Activated CD8-positive, alpha-beta memory T cell treated with anti-CD3 and anti-CD28 coated beads, Interleukin-2, amount 10 ng/mL, durations not matched to agents 7 days and 5 days (primary cell): ENCODE measurements at regions of chr16 and their contacts with region 1.

Region 1: GRCh38 chr16:1705688-1706385 is at the start of gene MAPK8IP3:
- DNase-seq: peak; percentile 92
- ATAC-seq: peak; percentile 88
- H3K4me3 Mint-ChIP-seq: peak within 1 kb of the TSS; percentile 99
- H3K27ac Mint-ChIP-seq: peak within 1 kb of the TSS; percentile 99
- H3K4me1 Mint-ChIP-seq: peaks cover 34% of the 10 kb centered on the region
- H3K27me3 Mint-ChIP-seq: no peaks in the 10 kb centered on the region
- total RNA-seq, gene MAPK8IP3: 78.9 to 101 TPM

Region 2: DNA sequence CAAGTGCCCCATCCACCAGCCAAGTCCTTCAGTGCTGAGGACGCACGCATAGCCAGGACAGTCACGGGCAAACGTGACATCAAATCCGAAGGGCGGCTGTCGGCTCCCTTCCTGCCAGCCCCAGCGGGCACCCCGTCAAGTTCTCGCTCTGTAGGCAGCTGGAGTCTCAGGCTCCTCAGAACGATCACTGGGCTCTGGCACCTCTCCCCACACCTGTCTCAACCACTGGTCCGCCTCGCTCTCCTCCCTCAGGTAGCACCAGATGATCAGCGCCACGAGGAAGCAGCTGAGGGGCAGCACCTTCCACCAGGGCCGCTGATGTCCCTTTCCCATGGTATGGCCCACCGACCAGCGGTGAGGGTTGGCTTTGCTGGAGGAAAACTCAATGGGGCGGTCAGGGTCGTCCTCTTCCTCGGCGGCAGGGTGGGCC is 285.7 kb before region 1 on chr16:
- CTCF ChIA-PET with region 1: interaction called, 11 read pairs
- DNase-seq: peak; percentile 48
- ATAC-seq: no peak
- H3K4me3 Mint-ChIP-seq: peak overlapping the region; percentile 83
- H3K27ac Mint-ChIP-seq: peak overlapping the region; percentile 97
- H3K4me1 Mint-ChIP-seq: peaks cover 42% of the 10 kb centered on the region
- H3K27me3 Mint-ChIP-seq: no peaks in the 10 kb centered on the region

Region 3: DNA sequence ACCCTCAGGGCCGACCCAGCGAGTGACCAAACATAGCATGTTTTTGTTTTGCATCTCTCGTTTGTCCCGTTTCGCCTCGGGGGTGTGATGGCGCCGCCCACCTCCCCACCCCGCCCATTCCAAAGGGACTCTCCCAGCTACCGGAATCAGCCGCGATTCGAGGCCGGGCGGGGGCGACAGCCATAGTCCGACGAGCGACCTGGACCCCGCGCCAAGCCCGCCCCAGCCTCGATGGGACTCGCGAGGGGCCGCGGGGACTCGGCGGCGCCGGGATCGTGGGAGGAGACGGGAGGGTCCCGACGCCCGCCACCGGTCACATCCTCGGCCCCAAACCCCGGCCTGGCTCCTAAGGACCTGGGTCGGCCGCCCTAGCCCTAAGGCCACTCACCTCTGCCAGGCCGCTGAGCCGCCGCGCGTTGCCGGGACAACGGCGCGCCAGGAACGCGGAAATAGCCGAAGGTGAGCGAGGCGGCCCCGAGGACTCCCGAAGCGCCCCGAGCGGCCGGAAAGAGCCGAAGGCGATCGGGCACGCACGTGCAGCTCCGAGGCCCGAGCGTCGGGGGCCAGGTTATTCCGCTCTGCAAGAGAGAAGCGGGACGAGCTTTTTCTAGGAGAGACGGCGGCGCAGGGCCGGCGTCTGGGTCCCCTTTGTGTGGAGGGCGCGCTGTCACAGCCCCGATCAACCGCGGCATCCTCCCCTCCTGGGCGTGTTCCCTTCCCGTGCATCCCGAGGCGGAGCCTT is 95.4 kb before region 1 on chr16:
- CTCF ChIA-PET with region 1: interaction called, 22 read pairs
- DNase-seq: peak; percentile 93
- ATAC-seq: peak; percentile 53
- H3K4me3 Mint-ChIP-seq: peak overlapping the region; percentile 83
- H3K27ac Mint-ChIP-seq: peak overlapping the region; percentile 100
- H3K4me1 Mint-ChIP-seq: peaks cover 35% of the 10 kb centered on the region
- H3K27me3 Mint-ChIP-seq: no peaks in the 10 kb centered on the region

Region 4: GRCh38 chr16:1677802-1678496 is 27.9 kb before region 1 on chr16 and contains the start of gene JPT2:
- CTCF ChIA-PET with region 1: interaction called, 35 read pairs
- DNase-seq: peak; percentile 97
- ATAC-seq: peak; percentile 98
- H3K4me3 Mint-ChIP-seq: peak within 1 kb of the TSS; percentile 93
- H3K27ac Mint-ChIP-seq: peak within 1 kb of the TSS; percentile 83
- H3K4me1 Mint-ChIP-seq: peaks cover 32% of the 10 kb centered on the region
- H3K27me3 Mint-ChIP-seq: no peaks in the 10 kb centered on the region
- total RNA-seq, gene JPT2: 55.0 to 62.4 TPM

Region 5: DNA sequence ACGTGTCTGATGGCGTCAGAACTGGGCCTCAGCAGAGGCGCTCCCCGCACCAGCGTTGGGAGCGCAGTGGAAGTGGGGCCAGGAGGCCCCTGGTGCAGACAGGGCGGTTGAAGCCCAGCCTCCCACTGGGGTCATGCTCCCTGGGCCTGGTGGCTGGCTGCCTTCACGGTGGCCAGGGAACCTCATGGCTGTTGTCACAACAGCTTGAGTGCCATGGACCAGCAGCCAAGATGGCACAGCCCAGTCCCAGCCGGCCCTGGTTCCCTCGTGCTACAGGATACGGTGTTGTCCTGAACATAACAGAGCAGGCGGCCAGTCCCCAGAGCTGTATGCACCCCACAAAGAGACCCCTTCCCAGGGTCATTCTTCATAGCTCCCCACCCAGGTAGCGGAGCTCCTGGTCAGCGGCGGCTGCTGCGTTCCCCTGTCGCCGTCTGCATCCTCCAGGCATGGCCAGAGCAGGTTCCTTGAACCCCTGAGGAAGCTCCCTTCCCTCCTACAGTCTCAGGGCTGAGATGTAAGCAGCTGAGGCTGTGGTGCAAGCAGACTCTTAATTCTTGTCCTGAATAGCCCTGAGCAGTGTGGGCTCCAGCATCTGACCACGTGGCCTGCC is 35.8 kb after region 1 on chr16:
- CTCF ChIA-PET with region 1: no interaction called
- DNase-seq: no peak
- ATAC-seq: no peak
- H3K4me3 Mint-ChIP-seq: no peak overlapping the region
- H3K27ac Mint-ChIP-seq: no peak overlapping the region
- H3K4me1 Mint-ChIP-seq: no peaks in the 10 kb centered on the region
- H3K27me3 Mint-ChIP-seq: no peaks in the 10 kb centered on the region

Region 6: GRCh38 chr16:1772736-1773584 is 67.1 kb after region 1 on chr16 and contains the starts of genes EME2 and MRPS34:
- CTCF ChIA-PET with region 1: interaction called, 25 read pairs
- DNase-seq: peak; percentile 86
- ATAC-seq: peak; percentile 63
- H3K4me3 Mint-ChIP-seq: peak within 1 kb of the TSS; percentile 100
- H3K27ac Mint-ChIP-seq: peak within 1 kb of the TSS; percentile 98
- H3K4me1 Mint-ChIP-seq: peaks cover 13% of the 10 kb centered on the region
- H3K27me3 Mint-ChIP-seq: no peaks in the 10 kb centered on the region
- total RNA-seq, gene EME2: 22.3 to 34.6 TPM
- total RNA-seq, gene MRPS34: 134 to 154 TPM

Region 7: GRCh38 chr16:1782352-1783091 is 76.7 kb after region 1 on chr16 and contains the starts of genes NUBP2 and SPSB3:
- CTCF ChIA-PET with region 1: interaction called, 10 read pairs
- DNase-seq: peak; percentile 100
- ATAC-seq: peak; percentile 91
- H3K4me3 Mint-ChIP-seq: peak within 1 kb of the TSS; percentile 93
- H3K27ac Mint-ChIP-seq: peak within 1 kb of the TSS; percentile 88
- H3K4me1 Mint-ChIP-seq: peaks cover 24% of the 10 kb centered on the region
- H3K27me3 Mint-ChIP-seq: no peaks in the 10 kb centered on the region
- total RNA-seq, gene NUBP2: 52.5 to 64.0 TPM
- total RNA-seq, gene SPSB3: 35.7 to 36.5 TPM

Region 8: DNA sequence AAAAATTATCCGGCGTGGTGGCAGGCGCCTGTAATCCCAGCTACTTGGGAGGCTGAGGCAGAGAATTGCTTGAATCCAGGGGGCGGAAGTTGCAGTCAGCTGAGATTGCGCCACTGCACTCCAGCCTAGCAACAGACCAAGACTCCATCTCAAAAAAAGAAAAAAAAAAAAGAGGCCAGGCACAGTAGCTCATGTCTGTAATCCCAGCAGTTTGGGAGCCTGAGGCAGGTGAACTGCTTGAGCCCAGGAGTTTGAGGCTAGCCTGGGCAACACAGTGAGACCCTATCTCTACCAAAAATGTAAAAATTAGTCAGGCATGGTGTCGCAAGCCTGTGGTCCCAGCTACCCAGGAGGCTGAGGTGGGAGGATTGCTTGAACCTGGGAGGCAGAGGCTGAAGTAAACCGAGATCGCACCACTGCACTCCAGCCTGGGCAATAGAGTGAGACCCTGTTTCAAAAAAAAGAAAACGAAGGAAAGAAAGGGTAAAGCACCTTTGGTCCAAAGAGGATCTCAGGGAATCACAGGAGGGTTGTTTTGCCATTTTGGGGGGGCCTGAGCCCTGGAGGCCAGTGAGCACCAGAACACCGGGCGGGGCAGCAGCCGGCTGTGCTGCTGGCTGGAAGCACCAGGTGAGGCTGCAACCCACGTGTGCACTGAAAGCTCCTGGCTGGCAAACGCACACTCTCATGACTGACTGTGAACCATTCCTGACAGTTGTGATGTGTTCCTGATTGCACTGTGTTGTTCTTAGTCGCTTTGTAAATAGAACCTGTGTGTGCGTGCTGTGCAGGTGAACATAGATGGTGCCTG is 194.0 kb after region 1 on chr16:
- CTCF ChIA-PET with region 1: no interaction called
- DNase-seq: no peak
- ATAC-seq: no peak
- H3K4me3 Mint-ChIP-seq: no peak overlapping the region
- H3K27ac Mint-ChIP-seq: no peak overlapping the region
- H3K4me1 Mint-ChIP-seq: no peaks in the 10 kb centered on the region
- H3K27me3 Mint-ChIP-seq: peaks cover 12% of the 10 kb centered on the region